SK-N-SH (cell line): ENCODE measurements at regions of chr11 and their contacts with region 1.

Region 1: GRCh38 chr11:32176223-32176934 is 85.5 kb downstream of the RCN1 start:
- DNase-seq: peak; percentile 72
- H3K4me3 ChIP-seq: no peak overlapping the region
- H3K27ac ChIP-seq: no peak overlapping the region
- H3K4me1 ChIP-seq: peaks cover 0 to 4% of the 10 kb centered on the region in 2 experiments; a peak in 1 of 4 replicates
- H3K27me3 ChIP-seq: peaks cover 27% of the 10 kb centered on the region; the same call in 1 of the 2 replicates
- CTCF ChIP-seq: peak; percentile 88
- EP300 ChIP-seq: no peak
- RAD21 ChIP-seq: peak; percentile 97

Region 2: GRCh38 chr11:31107062-31107461 is 1069.3 kb before region 1 on chr11:
- CTCF ChIA-PET with region 1: interaction called, 14 read pairs
- POLR2A ChIA-PET with region 1: no interaction called
- DNase-seq: peak; percentile 43
- H3K4me3 ChIP-seq: no peak overlapping the region; a peak in 1 of 4 replicates
- H3K27ac ChIP-seq: no peak overlapping the region
- H3K4me1 ChIP-seq: peaks cover 0 to 9% of the 10 kb centered on the region in 2 experiments; a peak in 1 of 4 replicates
- H3K27me3 ChIP-seq: no peaks in the 10 kb centered on the region; the same call in 1 of the 2 replicates
- CTCF ChIP-seq: peak; percentile 61
- EP300 ChIP-seq: no peak
- RAD21 ChIP-seq: peak; percentile 82

Region 3: DNA sequence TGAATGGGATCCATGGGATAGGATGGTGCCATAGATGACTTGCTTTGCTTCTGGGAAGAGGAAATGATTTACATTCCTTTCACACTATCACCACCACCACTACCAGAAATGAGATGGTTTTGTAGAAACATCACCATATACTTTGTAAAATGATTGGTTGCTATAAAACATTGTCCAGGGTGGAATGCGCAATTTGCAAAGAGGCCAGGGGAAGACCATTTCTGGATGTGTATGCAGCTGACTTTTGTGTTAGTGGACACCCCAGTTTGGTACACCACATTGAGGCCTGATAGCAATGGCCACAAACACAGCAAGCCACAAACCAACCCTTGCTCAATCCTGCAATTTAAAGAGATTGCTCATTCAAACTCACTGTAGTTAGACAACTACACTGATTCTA is 142.2 kb before region 1 on chr11:
- CTCF ChIA-PET with region 1: interaction called, 11 read pairs
- POLR2A ChIA-PET with region 1: no interaction called
- DNase-seq: no peak
- H3K4me3 ChIP-seq: no peak overlapping the region
- H3K27ac ChIP-seq: peak overlapping the region in 1 of 2 experiments; percentile 61; a peak in 2 of 4 replicates
- H3K4me1 ChIP-seq: peaks cover 0 to 9% of the 10 kb centered on the region in 2 experiments; a peak in 1 of 4 replicates
- H3K27me3 ChIP-seq: no peaks in the 10 kb centered on the region
- CTCF ChIP-seq: no peak
- EP300 ChIP-seq: no peak
- RAD21 ChIP-seq: no peak

Region 4: GRCh38 chr11:32052218-32052617 is 124.2 kb before region 1 on chr11:
- CTCF ChIA-PET with region 1: interaction called, 214 read pairs
- POLR2A ChIA-PET with region 1: no interaction called
- DNase-seq: peak; percentile 43
- H3K4me3 ChIP-seq: 0 out of 4 replicates have a peak overlapping the region, but pooled peaks of 1 of the 2 experiments have one; percentile 19
- H3K27ac ChIP-seq: no peak overlapping the region
- H3K4me1 ChIP-seq: no peaks in the 10 kb centered on the region; a peak in 1 of 4 replicates
- H3K27me3 ChIP-seq: peaks cover 63% of the 10 kb centered on the region
- CTCF ChIP-seq: peak; percentile 79
- EP300 ChIP-seq: no peak
- RAD21 ChIP-seq: peak; percentile 71

Region 5: GRCh38 chr11:32071811-32072210 is 104.6 kb before region 1 on chr11:
- CTCF ChIA-PET with region 1: interaction called, 13 read pairs
- POLR2A ChIA-PET with region 1: no interaction called
- DNase-seq: peak; percentile 23
- H3K4me3 ChIP-seq: no peak overlapping the region
- H3K27ac ChIP-seq: no peak overlapping the region
- H3K4me1 ChIP-seq: peaks cover 0 to 4% of the 10 kb centered on the region in 2 experiments; a peak in 2 of 4 replicates
- H3K27me3 ChIP-seq: peaks cover 43% of the 10 kb centered on the region
- CTCF ChIP-seq: peak; percentile 54
- EP300 ChIP-seq: no peak
- RAD21 ChIP-seq: peak; percentile 19; the same call in 1 of the 2 replicates

Region 6: DNA sequence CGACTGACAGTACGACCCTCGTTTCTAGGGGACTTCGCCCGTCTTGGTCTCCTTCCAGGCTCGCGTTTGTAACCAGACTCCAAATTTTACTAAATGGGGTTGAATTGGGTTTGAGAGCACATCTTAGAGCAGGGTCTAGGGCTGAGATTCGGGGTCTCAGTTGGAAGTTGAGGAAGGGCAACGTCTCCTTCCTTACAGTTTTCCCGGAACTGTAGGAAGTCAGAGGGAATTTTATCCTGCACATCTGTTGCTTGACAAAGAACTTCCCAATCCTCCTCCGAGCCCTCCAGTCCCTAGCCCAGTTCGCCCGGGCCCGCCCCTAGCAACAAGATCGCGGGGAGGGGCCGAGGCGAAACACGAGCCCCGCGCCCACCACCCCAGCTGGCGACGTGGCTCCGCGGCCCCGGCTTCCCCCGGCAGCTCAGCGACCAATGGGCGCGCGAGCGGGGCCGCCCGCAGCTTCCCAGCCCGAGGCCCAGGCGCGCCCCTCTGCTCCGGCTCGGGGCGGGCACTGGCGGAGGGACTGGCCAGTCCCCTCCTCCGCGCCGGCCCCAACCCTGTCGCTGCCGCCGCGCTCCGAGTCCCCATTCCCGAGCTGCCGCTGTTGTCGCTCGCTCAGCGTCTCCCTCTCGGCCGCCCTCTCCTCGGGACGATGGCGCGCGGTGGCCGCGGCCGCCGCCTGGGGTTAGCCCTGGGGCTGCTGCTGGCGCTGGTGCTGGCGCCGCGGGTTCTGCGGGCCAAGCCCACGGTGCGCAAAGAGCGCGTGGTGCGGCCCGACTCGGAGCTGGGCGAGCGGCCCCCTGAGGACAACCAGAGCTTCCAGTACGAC is 85.6 kb before region 1 on chr11 and contains the start of gene RCN1:
- CTCF ChIA-PET with region 1: no interaction called
- POLR2A ChIA-PET with region 1: no interaction called
- DNase-seq: peak; percentile 93
- H3K4me3 ChIP-seq: peak within 1 kb of the TSS; percentile 78 to 85
- H3K27ac ChIP-seq: peak within 1 kb of the TSS; percentile 73 to 83
- H3K4me1 ChIP-seq: peaks cover 9 to 39% of the 10 kb centered on the region in 2 experiments; a peak in 2 of 4 replicates
- H3K27me3 ChIP-seq: no peaks in the 10 kb centered on the region
- CTCF ChIP-seq: no peak
- EP300 ChIP-seq: no peak
- RAD21 ChIP-seq: no peak
- polyA plus RNA-seq, gene RCN1: 62.6 and 63.3 TPM in 2 replicates

Region 7: GRCh38 chr11:32198053-32198452 is 21.7 kb after region 1 on chr11:
- CTCF ChIA-PET with region 1: interaction called, 10 read pairs
- POLR2A ChIA-PET with region 1: no interaction called
- DNase-seq: no peak
- H3K4me3 ChIP-seq: no peak overlapping the region
- H3K27ac ChIP-seq: no peak overlapping the region
- H3K4me1 ChIP-seq: no peaks in the 10 kb centered on the region
- H3K27me3 ChIP-seq: peaks cover 32% of the 10 kb centered on the region; the same call in 1 of the 2 replicates
- CTCF ChIP-seq: no peak
- EP300 ChIP-seq: no peak
- RAD21 ChIP-seq: no peak